ENCODE measurements at regions of chr16 and their contacts with region 1.

Region 1: DNA sequence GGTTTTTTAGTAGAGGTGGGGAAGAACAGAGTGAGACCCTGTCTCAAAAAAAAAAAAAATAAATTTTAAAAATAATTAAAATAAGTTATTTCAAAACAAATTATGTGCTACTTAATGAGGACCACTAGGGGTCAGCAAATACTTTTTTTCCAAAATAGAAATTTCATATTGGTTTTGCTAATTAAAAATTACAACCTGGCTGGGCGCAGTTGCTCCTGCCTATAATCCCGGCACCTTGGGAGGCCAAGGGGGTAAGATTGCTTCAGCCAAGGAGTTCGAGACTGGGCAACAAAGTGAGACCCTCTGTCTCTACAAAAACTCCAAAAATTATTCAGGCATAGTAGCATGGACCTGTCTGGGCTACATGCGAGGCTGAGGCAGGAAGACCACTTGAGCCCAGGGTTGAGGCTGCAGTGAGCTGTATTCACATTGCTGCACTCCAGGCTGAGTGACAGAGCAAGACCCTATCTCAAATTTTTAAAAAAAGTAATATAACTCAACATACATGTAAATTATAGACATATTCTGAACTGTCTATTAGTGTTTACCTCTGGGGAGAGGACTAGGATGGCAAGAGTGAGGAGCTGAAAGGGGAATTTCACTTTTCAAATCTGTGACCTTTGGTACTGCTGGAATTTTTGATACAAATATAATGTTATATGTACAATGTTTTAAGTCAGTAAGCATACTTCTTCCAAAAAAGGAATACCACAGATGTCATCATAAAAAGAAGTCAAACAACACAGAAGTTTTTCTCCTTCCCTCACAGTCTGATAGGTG is 8.1 kb downstream of the MEIOB start:
- DNase-seq: peak in 1 of 2 donors; percentile 16
- ATAC-seq: no peak
- H3K4me3 ChIP-seq: no peak overlapping the region
- H3K27ac ChIP-seq: no peak overlapping the region
- H3K4me1 ChIP-seq: no peaks in the 10 kb centered on the region
- H3K27me3 ChIP-seq: no peaks in the 10 kb centered on the region

Region 2: DNA sequence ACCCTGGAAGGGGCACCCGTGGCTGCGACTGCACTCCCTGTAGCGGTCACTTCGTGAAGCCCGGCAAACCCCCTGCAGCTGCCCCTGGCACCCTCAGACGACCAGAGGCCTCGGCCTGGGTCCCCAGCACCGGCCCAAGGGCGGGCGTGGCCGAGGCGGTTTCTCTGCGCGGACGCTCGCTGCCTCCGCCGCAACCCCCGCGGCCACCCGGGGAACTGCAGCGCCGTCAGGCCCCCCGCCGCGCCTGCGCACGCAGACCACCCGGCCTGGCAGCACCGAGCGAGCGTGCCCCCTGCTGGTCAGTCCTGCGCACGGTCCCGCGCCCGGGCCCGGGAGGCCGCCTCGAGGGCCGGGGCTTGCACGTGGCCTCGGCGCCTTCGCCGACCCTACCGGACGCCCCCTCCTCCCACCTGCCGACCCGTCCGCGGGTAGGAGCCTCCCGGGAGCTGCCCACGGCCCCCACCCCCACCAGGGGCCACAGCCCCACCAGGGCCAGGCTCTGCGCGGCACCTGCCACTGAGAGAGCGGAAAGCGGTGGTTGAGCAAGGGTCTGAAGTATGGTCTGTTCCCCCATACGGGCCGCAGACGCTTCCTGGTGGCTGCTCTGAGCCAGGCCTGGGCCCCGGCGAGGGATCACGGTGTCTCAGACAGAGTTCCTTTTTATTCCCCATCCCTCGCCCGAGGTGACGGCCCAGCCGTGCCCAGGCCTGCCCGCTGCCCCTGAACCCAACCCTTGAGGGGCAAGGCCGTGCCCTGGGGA is 65.9 kb after region 1 on chr16:
- intact Hi-C with region 1: loop called (anchors 2 to 5 kb)
- DNase-seq: peak; percentile 91 to 97
- ATAC-seq: peak; percentile 96
- H3K4me3 ChIP-seq: peak overlapping the region in 1 of 2 donors; percentile 54
- H3K27ac ChIP-seq: no peak overlapping the region
- H3K4me1 ChIP-seq: no peaks in the 10 kb centered on the region
- H3K27me3 ChIP-seq: peaks cover 0 to 2% of the 10 kb centered on the region in 2 donors

Measured in aorta (tissue), 5 donors.